A549 (cell line): ENCODE measurements at regions of chr5 and their contacts with region 1.

Region 1: DNA sequence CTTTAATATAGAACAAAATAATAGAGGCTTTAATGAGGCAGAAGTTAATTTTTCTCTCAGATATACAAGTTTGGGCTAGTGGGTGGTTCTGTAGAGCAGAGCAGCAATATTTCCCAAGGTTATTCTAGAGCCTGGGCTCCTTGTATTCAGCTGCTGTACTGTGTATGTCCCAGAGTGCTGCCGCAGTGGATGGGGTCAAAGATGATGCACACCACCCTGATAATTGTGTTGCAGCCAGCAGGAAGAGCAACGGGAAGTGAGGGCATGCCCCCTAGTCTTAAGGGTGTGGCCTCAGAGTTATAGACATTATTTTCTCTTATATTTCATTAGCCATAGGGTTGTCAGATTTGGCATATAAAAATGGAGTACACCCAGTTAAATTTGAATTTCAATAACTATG is 23.9 kb upstream of the KIF4B start:
- DNase-seq: no peak
- ATAC-seq: no peak
- H3K4me3 ChIP-seq: no peak overlapping the region
- H3K27ac ChIP-seq: no peak overlapping the region
- H3K4me1 ChIP-seq: no peaks in the 10 kb centered on the region
- CTCF ChIP-seq: no peak
- EP300 ChIP-seq: no peak
- POLR2A ChIP-seq: no peak
- RAD21 ChIP-seq: no peak

Region 2: GRCh38 chr5:155004138-155004744 is 14.6 kb after region 1 on chr5:
- CTCF ChIA-PET with region 1: interaction called, 11 read pairs
- POLR2A ChIA-PET with region 1: no interaction called
- DNase-seq: peak in 1 of 2 experiments; percentile 45
- ATAC-seq: peak; percentile 87 to 97
- H3K4me3 ChIP-seq: no peak overlapping the region
- H3K27ac ChIP-seq: no peak overlapping the region
- H3K4me1 ChIP-seq: no peaks in the 10 kb centered on the region
- CTCF ChIP-seq: peak; percentile 59
- EP300 ChIP-seq: no peak
- POLR2A ChIP-seq: no peak
- RAD21 ChIP-seq: peak; percentile 70 to 80

Region 3: DNA sequence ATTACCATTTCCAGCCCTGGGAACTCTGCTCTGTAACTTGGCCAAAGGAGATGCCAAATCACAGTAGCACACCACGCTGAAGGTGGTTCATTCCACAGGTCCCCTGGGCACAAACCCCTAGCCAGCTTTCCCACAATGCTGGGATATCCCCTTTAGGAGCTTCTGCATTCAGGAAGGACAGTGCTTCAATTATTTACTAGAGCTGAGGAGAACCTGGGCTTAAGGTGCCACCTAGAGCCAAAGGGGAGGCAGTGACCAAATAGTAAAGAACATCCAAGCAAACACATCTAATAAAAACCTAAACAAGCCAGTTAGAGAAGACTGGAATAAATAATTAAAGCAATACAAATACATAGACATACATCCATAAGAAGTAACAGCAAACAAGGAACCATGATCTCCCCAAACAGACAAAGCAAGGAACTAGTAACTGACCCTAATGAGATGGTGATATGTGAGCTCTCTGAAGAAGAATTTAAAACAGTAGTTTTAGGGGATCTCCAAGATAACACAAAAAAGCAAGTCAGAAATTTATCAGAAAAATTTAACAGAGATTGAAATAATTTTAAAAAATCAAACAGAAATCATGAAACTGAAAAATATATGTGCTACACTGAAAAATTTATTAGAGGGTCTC is 38.5 kb after region 1 on chr5:
- CTCF ChIA-PET with region 1: no interaction called
- POLR2A ChIA-PET with region 1: no interaction called
- DNase-seq: peak; percentile 15 to 36
- ATAC-seq: peak; percentile 62 to 80; a peak in 5 of 6 replicates
- H3K4me3 ChIP-seq: no peak overlapping the region
- H3K27ac ChIP-seq: no peak overlapping the region
- H3K4me1 ChIP-seq: no peaks in the 10 kb centered on the region
- CTCF ChIP-seq: peak; percentile 26; the same call in 1 of the 3 replicates
- EP300 ChIP-seq: no peak
- POLR2A ChIP-seq: no peak
- RAD21 ChIP-seq: peak; percentile 42 to 67; a peak in 4 of 5 replicates